Activated T-helper 2 cell treated with anti-CD3 and anti-CD28 coated beads, Interferon-gamma antibody, Interleukin-2, Interleukin-4, amounts not matched to agents 10 μg/mL and 5 μg/mL and 100 μg/mL, durations not matched to agents 14 hours and 24 hours and 36 hours (primary cell): ENCODE measurements at regions of chr4 and their contacts with region 1.

Region 1: GRCh38 chr4:6909073-6909965 is at the start of gene TBC1D14:
- DNase-seq: peak; percentile 82
- H3K4me3 Mint-ChIP-seq: peak within 1 kb of the TSS; percentile 88
- H3K27ac Mint-ChIP-seq: peak within 1 kb of the TSS; percentile 87
- H3K4me1 Mint-ChIP-seq: peaks cover 31% of the 10 kb centered on the region
- H3K27me3 Mint-ChIP-seq: peaks cover 6% of the 10 kb centered on the region
- total RNA-seq, gene TBC1D14: 34.9 and 35.1 TPM in 2 replicates

Region 2: GRCh38 chr4:6640292-6641163 is 268.8 kb before region 1 on chr4 and contains the start of gene MRFAP1:
- intact Hi-C with region 1: loop called (anchors 1 kb)
- DNase-seq: peak; percentile 93
- H3K4me3 Mint-ChIP-seq: peak within 1 kb of the TSS; percentile 97
- H3K27ac Mint-ChIP-seq: peak within 1 kb of the TSS; percentile 99
- H3K4me1 Mint-ChIP-seq: peaks cover 13% of the 10 kb centered on the region
- H3K27me3 Mint-ChIP-seq: no peaks in the 10 kb centered on the region
- total RNA-seq, gene MRFAP1: 105 TPM in 2 replicates

Region 3: GRCh38 chr4:6898763-6899162 is 10.6 kb before region 1 on chr4:
- intact Hi-C with region 1: loop called (anchors 1 kb)
- DNase-seq: no peak
- H3K4me3 Mint-ChIP-seq: no peak overlapping the region
- H3K27ac Mint-ChIP-seq: peak overlapping the region; percentile 51
- H3K4me1 Mint-ChIP-seq: peaks cover 25% of the 10 kb centered on the region
- H3K27me3 Mint-ChIP-seq: no peaks in the 10 kb centered on the region

Region 4: GRCh38 chr4:6942238-6942800 is 33.0 kb after region 1 on chr4:
- intact Hi-C with region 1: loop called (anchors 5 kb)
- DNase-seq: no peak
- H3K4me3 Mint-ChIP-seq: peak overlapping the region; percentile 45
- H3K27ac Mint-ChIP-seq: peak overlapping the region; percentile 64
- H3K4me1 Mint-ChIP-seq: peaks cover 33% of the 10 kb centered on the region
- H3K27me3 Mint-ChIP-seq: no peaks in the 10 kb centered on the region

Region 5: GRCh38 chr4:7067452-7068278 is 158.3 kb after region 1 on chr4 and contains the start of gene GRPEL1:
- intact Hi-C with region 1: loop called (anchors 1 kb)
- DNase-seq: peak; percentile 99
- H3K4me3 Mint-ChIP-seq: peak within 1 kb of the TSS; percentile 89
- H3K27ac Mint-ChIP-seq: peak within 1 kb of the TSS; percentile 93
- H3K4me1 Mint-ChIP-seq: peaks cover 34% of the 10 kb centered on the region
- H3K27me3 Mint-ChIP-seq: peaks cover 12% of the 10 kb centered on the region
- total RNA-seq, gene GRPEL1: 84.4 and 84.6 TPM in 2 replicates